PC-9 (cell line): ENCODE measurements at regions of chr20 and their contacts with region 1.

Region 1: DNA sequence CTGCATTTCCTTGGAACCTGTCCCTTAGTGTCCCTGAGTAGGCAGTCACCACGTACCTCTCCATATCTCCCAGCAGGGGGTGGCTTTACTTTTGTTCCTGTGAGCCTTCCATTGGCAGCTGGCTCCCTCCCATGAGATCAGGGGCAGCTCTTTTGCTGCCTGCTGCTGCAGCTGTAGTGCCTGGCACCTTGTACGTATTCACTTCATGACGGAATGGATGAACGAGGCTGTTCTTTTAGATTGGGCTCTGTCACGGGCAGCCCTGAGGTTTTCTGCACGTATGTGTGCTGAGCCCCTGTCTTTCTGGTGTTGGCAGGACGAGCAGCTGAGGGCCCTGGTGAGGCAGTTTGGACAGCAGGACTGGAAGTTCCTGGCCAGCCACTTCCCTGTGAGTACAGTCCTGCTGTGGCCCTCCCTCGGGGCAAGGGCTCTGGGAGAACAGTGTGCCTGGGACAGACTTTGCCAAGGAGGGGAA is 14.6 kb downstream of the MYBL2 start:
- DNase-seq: no peak
- H3K4me3 ChIP-seq: no peak overlapping the region
- H3K27ac ChIP-seq: no peak overlapping the region
- H3K4me1 ChIP-seq: no peaks in the 10 kb centered on the region
- H3K27me3 ChIP-seq: no peaks in the 10 kb centered on the region
- CTCF ChIP-seq: no peak

Region 2: DNA sequence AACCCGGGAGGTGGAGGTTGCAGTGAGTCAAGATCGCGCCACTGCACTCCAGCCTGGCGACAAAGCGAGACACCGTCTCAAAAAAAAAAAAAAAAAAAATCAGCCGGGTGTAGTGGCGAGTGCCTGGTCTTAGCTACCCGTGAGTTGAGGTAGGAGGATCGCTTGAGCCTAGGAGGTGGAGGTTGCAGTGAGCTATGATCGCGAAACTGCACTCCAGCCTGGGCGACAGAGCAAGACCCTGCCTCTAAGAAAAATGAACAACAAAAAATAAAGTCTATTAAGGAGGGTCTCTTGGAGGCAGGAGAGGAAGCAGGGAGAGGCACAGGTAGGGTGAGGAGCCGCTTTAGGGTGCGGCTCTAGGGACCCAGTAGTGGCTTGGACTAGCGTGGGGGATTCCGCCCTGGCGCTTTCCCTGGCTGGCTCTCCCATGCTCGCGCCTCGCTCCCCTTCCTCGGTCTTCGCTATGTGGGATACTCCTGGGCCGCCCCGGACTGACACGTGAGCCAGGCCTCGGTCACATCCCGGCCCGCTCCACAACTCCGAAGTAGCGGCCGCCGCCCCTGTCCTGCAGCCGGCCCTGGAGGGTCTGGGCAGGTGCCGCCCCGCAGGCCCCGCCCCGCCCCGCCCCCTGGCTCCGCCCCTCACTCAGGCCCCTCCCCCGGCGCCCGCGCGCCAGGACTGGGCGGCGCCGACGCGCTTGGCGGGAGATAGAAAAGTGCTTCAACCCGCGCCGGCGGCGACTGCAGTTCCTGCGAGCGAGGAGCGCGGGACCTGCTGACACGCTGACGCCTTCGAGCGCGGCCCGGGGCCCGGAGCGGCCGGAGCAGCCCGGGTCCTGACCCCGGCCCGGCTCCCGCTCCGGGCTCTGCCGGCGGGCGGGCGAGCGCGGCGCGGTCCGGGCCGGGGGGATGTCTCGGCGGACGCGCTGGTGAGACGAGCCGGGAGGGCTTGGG is 14.9 kb before region 1 on chr20 and contains the start of gene MYBL2:
- CTCF ChIA-PET with region 1: interaction called, 11 read pairs
- POLR2A ChIA-PET with region 1: no interaction called
- intact Hi-C with region 1: no loop called
- DNase-seq: peak; percentile 40 to 72
- H3K4me3 ChIP-seq: peak within 1 kb of the TSS; percentile 70
- H3K27ac ChIP-seq: no peak within 1 kb of the TSS
- H3K4me1 ChIP-seq: peaks cover 33% of the 10 kb centered on the region
- H3K27me3 ChIP-seq: no peaks in the 10 kb centered on the region
- CTCF ChIP-seq: no peak
- total RNA-seq, gene MYBL2: 124 and 152 TPM in 2 replicates

Region 3: GRCh38 chr20:43942661-43943290 is 261.3 kb after region 1 on chr20:
- CTCF ChIA-PET with region 1: no interaction called
- POLR2A ChIA-PET with region 1: no interaction called
- intact Hi-C with region 1: no loop called
- DNase-seq: peak; percentile 70 to 85
- H3K4me3 ChIP-seq: peak overlapping the region; percentile 53
- H3K27ac ChIP-seq: peak overlapping the region; percentile 95
- H3K4me1 ChIP-seq: peaks cover 68% of the 10 kb centered on the region
- H3K27me3 ChIP-seq: no peaks in the 10 kb centered on the region
- CTCF ChIP-seq: no peak